ENCODE measurements at regions of chr16 and their contacts with region 1.

Region 1: GRCh38 chr16:75464130-75464918 is at the start of gene TMEM170A:
- DNase-seq: peak; percentile 99
- ATAC-seq: peak; percentile 92
- H3K4me3 ChIP-seq: peak within 1 kb of the TSS; percentile 26 to 79 (median 72)
- H3K4me3 Mint-ChIP-seq: peak within 1 kb of the TSS; percentile 96
- H3K27ac ChIP-seq: peak within 1 kb of the TSS; percentile 92 to 93
- H3K27ac Mint-ChIP-seq: peak within 1 kb of the TSS; percentile 93
- H3K4me1 ChIP-seq: peaks cover 15 to 26% of the 10 kb centered on the region in 2 donors
- H3K4me1 Mint-ChIP-seq: peaks cover 37% of the 10 kb centered on the region
- H3K27me3 ChIP-seq: no peaks in the 10 kb centered on the region
- H3K27me3 Mint-ChIP-seq: no peaks in the 10 kb centered on the region
- CTCF ChIP-seq: peak; percentile 100
- total RNA-seq, gene TMEM170A: 37.9 and 45.6 TPM in 2 replicates

Region 2: DNA sequence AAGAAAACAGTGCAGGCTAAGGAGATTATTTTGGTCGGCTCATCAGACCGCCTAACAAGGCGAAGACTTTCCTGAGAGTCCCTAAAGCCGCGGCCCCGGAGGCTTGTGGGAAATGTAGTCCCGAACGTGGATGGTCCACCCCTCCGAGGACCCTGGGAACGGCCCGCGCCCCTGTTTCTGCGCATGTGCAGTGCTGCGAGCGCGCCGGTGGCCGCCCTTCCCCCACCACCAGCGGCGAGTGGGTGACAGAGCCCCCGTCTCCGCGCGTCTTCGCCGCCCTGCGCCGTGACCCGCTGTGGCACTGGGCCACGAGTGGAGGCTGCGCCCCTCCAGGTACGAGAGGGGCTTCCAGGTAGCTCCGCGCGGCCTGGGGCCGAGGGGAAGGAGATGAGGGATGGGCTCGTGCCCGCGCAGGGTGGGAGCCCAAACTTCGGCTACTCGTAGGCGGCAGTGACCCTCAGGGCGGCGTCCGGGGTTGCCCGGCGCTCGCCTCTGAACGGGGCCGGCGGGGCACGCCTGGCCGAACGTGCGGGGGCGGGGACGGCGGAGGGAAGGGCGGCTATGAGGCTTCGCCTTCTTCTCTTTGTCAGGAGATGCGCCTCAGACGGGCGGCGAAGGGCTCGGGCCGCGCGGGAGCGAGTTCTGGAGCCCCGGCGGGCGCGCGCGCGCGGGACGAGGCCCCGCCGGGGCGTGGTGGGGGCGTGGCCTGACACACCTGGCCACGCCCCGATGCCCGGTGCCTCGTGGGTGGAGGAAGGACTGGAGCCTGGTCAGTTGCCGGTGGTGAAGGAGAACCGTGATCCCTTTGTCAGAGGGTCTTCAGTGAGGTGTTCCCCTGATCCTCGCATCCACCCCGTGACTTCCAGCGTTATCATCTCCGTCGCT is 315.8 kb before region 1 on chr16 and contains the start of gene ZFP1:
- CTCF ChIA-PET with region 1: interaction called, 3 read pairs
- POLR2A ChIA-PET with region 1: no interaction called
- intact Hi-C with region 1: loop called (anchors 1 kb)
- DNase-seq: peak; percentile 95
- ATAC-seq: peak; percentile 86
- H3K4me3 ChIP-seq: peak within 1 kb of the TSS; percentile 54 to 97 (median 95)
- H3K4me3 Mint-ChIP-seq: peak within 1 kb of the TSS; percentile 89
- H3K27ac ChIP-seq: peak within 1 kb of the TSS; percentile 86 to 90
- H3K27ac Mint-ChIP-seq: peak within 1 kb of the TSS; percentile 90
- H3K4me1 ChIP-seq: peaks cover 5 to 7% of the 10 kb centered on the region in 2 donors
- H3K4me1 Mint-ChIP-seq: peaks cover 20% of the 10 kb centered on the region
- H3K27me3 ChIP-seq: peaks cover 0 to 2% (median 0%) of the 10 kb centered on the region in 4 experiments
- H3K27me3 Mint-ChIP-seq: no peaks in the 10 kb centered on the region
- CTCF ChIP-seq: no peak
- total RNA-seq, gene ZFP1: 13.4 and 14.1 TPM in 2 replicates

Region 3: DNA sequence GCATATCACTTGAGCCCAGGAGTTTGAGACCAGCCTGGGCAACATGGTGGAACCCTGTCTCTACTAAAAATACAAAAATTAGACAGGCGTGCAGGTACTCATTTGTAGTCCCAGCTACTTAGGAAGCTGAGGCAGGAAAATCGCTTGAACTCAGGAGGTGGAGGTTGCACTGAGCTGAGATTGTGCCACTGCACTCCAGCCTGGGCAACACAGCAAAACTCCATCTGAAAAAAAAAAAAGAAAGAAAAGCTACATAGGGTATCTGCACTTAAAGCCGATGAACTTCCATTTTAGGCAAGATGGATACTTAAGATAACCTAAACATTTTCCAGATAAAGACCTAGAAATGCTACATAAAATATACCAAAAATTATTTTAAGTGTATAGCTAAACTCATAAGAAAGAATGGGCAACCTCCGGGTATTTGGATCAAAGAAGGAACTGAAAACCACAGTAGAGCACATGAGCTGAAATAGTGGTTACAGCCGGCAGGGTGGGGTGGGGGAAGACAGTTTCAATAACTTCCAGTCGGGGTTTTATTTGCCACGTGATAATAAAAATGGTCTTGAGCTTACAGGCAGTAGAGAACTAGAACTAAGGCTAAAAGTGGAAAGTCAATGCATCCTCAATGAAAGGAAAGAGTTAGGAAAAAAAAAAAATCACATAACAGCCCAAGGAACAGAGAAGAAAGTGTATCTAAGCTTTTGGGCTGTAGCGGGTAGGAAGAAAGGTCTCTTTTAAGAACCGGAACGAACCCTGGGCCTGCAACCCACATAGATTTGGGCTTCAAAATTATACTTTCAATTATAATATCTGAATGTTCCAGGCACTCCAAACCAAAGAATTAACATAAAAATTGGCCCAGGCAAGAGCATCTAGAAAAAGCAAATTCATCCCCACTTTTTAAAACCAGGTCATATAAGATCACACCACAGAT is 84.1 kb before region 1 on chr16:
- CTCF ChIA-PET with region 1: interaction called, 4 read pairs
- POLR2A ChIA-PET with region 1: no interaction called
- intact Hi-C with region 1: loop called (anchors 1 kb)
- DNase-seq: peak; percentile 87
- ATAC-seq: peak; percentile 98
- H3K4me3 ChIP-seq: no peak overlapping the region
- H3K4me3 Mint-ChIP-seq: peak overlapping the region; percentile 44
- H3K27ac ChIP-seq: no peak overlapping the region
- H3K27ac Mint-ChIP-seq: peak overlapping the region; percentile 57
- H3K4me1 ChIP-seq: peaks cover 23 to 41% of the 10 kb centered on the region in 2 donors
- H3K4me1 Mint-ChIP-seq: peaks cover 27% of the 10 kb centered on the region
- H3K27me3 ChIP-seq: peaks cover 10 to 79% (median 71%) of the 10 kb centered on the region in 4 experiments
- H3K27me3 Mint-ChIP-seq: peaks cover 77% of the 10 kb centered on the region
- CTCF ChIP-seq: no peak

Region 4: DNA sequence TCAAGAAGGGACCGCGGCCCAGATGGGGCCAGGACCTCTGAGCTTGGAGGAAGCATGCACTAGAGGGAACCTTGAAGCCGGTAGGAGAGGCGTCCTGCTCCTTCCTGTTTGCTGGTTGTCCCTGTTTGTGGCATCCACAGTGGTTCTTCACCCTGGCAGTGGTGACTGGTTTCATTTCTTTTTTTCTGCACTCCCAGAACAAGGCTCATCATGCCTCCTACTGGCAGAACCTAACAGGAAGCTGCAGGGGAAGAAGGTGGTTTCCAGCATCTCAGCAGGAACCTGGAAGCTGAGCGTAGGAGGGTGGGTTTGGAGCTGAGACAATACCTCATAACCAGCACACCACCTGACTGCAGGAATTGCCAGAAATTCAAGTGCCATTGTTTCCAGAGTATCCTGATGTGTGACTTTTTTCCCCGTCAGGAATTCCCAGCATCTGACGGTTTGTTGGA is 85.9 kb after region 1 on chr16:
- CTCF ChIA-PET with region 1: interaction called, 5 read pairs
- POLR2A ChIA-PET with region 1: interaction called, 12 read pairs
- intact Hi-C with region 1: no loop called
- DNase-seq: peak; percentile 74
- ATAC-seq: peak; percentile 80
- H3K4me3 ChIP-seq: no peak overlapping the region
- H3K4me3 Mint-ChIP-seq: no peak overlapping the region
- H3K27ac ChIP-seq: no peak overlapping the region
- H3K27ac Mint-ChIP-seq: no peak overlapping the region
- H3K4me1 ChIP-seq: peaks cover 8 to 13% of the 10 kb centered on the region in 2 donors
- H3K4me1 Mint-ChIP-seq: peaks cover 12% of the 10 kb centered on the region
- H3K27me3 ChIP-seq: peaks cover 0 to 6% (median 0%) of the 10 kb centered on the region in 4 experiments
- H3K27me3 Mint-ChIP-seq: no peaks in the 10 kb centered on the region
- CTCF ChIP-seq: no peak

Region 5: DNA sequence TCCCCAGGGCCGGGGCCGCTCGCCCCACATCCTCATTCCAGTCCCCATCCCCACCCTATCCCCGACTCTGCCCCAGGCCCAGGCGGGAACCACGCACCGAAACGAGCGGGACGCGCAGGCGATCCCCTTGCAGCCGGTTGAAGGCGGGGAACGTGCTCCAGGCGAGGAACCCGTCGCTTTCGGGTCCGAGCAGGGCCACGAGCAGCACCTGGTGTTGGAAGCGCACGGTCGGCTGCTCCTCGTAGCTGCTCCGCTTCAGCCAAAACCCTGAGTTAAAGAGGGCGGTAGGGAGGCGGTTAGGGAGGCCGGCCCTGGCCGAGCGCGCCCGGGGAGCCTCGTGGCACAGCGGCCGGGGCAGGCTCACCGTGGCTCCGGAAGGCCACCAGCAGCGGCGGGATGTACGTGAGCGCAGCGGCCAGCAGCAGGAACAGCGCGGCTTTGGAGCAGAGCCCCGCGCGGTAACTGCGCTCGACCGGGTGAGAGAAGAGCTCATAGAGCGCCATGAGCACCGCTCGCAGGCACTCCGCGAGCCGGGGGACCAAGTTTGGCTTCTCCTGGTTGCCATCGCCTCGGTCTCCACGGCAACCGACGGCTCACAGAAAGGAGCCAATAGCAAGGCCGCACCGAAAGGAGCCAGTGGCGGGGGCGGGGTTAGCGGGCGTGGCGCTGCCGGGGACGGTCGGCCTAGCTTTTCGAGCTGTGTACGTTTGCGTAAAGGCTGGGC is 91.5 kb after region 1 on chr16 and contains the start of gene TMEM231:
- CTCF ChIA-PET with region 1: interaction called, 5 read pairs
- POLR2A ChIA-PET with region 1: interaction called, 12 read pairs
- intact Hi-C with region 1: loop called (anchors 1 kb)
- DNase-seq: peak; percentile 96
- ATAC-seq: peak; percentile 93
- H3K4me3 ChIP-seq: peak within 1 kb of the TSS; percentile 34 to 78 (median 71)
- H3K4me3 Mint-ChIP-seq: peak within 1 kb of the TSS; percentile 97
- H3K27ac ChIP-seq: peak within 1 kb of the TSS; percentile 9 to 76
- H3K27ac Mint-ChIP-seq: peak within 1 kb of the TSS; percentile 88
- H3K4me1 ChIP-seq: peaks cover 9 to 16% of the 10 kb centered on the region in 2 donors
- H3K4me1 Mint-ChIP-seq: peaks cover 10% of the 10 kb centered on the region
- H3K27me3 ChIP-seq: peaks cover 0 to 8% (median 0%) of the 10 kb centered on the region in 4 experiments
- H3K27me3 Mint-ChIP-seq: no peaks in the 10 kb centered on the region
- CTCF ChIP-seq: peak; percentile 17
- total RNA-seq, gene TMEM231: 4.7 and 6.0 TPM in 2 replicates

Region 6: GRCh38 chr16:75566040-75566810 is 101.9 kb after region 1 on chr16 and contains the start of gene GABARAPL2:
- CTCF ChIA-PET with region 1: interaction called, 10 read pairs
- POLR2A ChIA-PET with region 1: no interaction called
- intact Hi-C with region 1: loop called (anchors 1 kb)
- DNase-seq: peak; percentile 97
- ATAC-seq: peak; percentile 70
- H3K4me3 ChIP-seq: peak within 1 kb of the TSS; percentile 75 to 96 (median 95)
- H3K4me3 Mint-ChIP-seq: peak within 1 kb of the TSS; percentile 100
- H3K27ac ChIP-seq: peak within 1 kb of the TSS; percentile 96 to 99
- H3K27ac Mint-ChIP-seq: peak within 1 kb of the TSS; percentile 97
- H3K4me1 ChIP-seq: peaks cover 44 to 61% of the 10 kb centered on the region in 2 donors
- H3K4me1 Mint-ChIP-seq: peaks cover 53% of the 10 kb centered on the region
- H3K27me3 ChIP-seq: no peaks in the 10 kb centered on the region
- H3K27me3 Mint-ChIP-seq: no peaks in the 10 kb centered on the region
- CTCF ChIP-seq: no peak
- total RNA-seq, gene GABARAPL2: 84.8 and 84.9 TPM in 2 replicates

Region 7: GRCh38 chr16:75622761-75623605 is 158.7 kb after region 1 on chr16 and contains the start of gene ADAT1:
- CTCF ChIA-PET with region 1: interaction called, 4 read pairs
- POLR2A ChIA-PET with region 1: no interaction called
- intact Hi-C with region 1: loop called (anchors 1 kb)
- DNase-seq: peak; percentile 98
- ATAC-seq: peak; percentile 94
- H3K4me3 ChIP-seq: peak within 1 kb of the TSS; percentile 68 to 85 (median 80)
- H3K4me3 Mint-ChIP-seq: peak within 1 kb of the TSS; percentile 96
- H3K27ac ChIP-seq: peak within 1 kb of the TSS; percentile 87 to 91
- H3K27ac Mint-ChIP-seq: peak within 1 kb of the TSS; percentile 98
- H3K4me1 ChIP-seq: peaks cover 12 to 27% of the 10 kb centered on the region in 2 donors
- H3K4me1 Mint-ChIP-seq: peaks cover 27% of the 10 kb centered on the region
- H3K27me3 ChIP-seq: no peaks in the 10 kb centered on the region
- H3K27me3 Mint-ChIP-seq: no peaks in the 10 kb centered on the region
- CTCF ChIP-seq: no peak
- total RNA-seq, gene ADAT1: 71.2 and 75.2 TPM in 2 replicates